Adrenal gland (tissue), 19 donors: ENCODE measurements at regions of chr22 and their contacts with region 1.

Region 1: GRCh38 chr22:36873680-36874537 is 13.1 kb downstream of the NCF4 start:
- DNase-seq: peak in 6 of 7 donors; percentile 41 to 78 (median 54)
- H3K4me3 ChIP-seq: no peak overlapping the region
- H3K27ac ChIP-seq: peak overlapping the region in 1 of 5 donors; percentile 72
- H3K4me1 ChIP-seq: no peaks in the 10 kb centered on the region
- H3K27me3 ChIP-seq: no peaks in the 10 kb centered on the region
- CTCF ChIP-seq: peak; percentile 23 to 74 (median 58)
- POLR2A ChIP-seq: no peak

Region 2: GRCh38 chr22:37043828-37044538 is 170.1 kb after region 1 on chr22:
- intact Hi-C with region 1: loop called in 1 of 2 experiments (anchors 10 kb)
- DNase-seq: peak; percentile 74 to 87 (median 81)
- H3K4me3 ChIP-seq: no peak overlapping the region
- H3K27ac ChIP-seq: no peak overlapping the region
- H3K4me1 ChIP-seq: peaks cover 0 to 4% of the 10 kb centered on the region in 2 donors
- H3K27me3 ChIP-seq: no peaks in the 10 kb centered on the region
- CTCF ChIP-seq: peak; percentile 63 to 77 (median 66)
- POLR2A ChIP-seq: no peak